Activated CD8-positive, alpha-beta memory T cell treated with anti-CD3 and anti-CD28 coated beads, Interleukin-2, amount 10 ng/mL, durations not matched to agents 7 days and 5 days (primary cell): ENCODE measurements at regions of chr6 and their contacts with region 1.

Region 1: GRCh38 chr6:43506667-43507471 is 3.3 kb downstream of the LRRC73 start:
- DNase-seq: peak; percentile 86
- ATAC-seq: peak; percentile 68
- H3K4me3 Mint-ChIP-seq: no peak overlapping the region
- H3K27ac Mint-ChIP-seq: peak overlapping the region; percentile 20
- H3K4me1 Mint-ChIP-seq: peaks cover 17% of the 10 kb centered on the region
- H3K27me3 Mint-ChIP-seq: peaks cover 18% of the 10 kb centered on the region

Region 2: GRCh38 chr6:43263314-43264178 is 243.3 kb before region 1 on chr6:
- CTCF ChIA-PET with region 1: interaction called, 45 read pairs
- DNase-seq: peak; percentile 85
- ATAC-seq: peak; percentile 96
- H3K4me3 Mint-ChIP-seq: no peak overlapping the region
- H3K27ac Mint-ChIP-seq: no peak overlapping the region
- H3K4me1 Mint-ChIP-seq: no peaks in the 10 kb centered on the region
- H3K27me3 Mint-ChIP-seq: peaks cover 10% of the 10 kb centered on the region

Region 3: DNA sequence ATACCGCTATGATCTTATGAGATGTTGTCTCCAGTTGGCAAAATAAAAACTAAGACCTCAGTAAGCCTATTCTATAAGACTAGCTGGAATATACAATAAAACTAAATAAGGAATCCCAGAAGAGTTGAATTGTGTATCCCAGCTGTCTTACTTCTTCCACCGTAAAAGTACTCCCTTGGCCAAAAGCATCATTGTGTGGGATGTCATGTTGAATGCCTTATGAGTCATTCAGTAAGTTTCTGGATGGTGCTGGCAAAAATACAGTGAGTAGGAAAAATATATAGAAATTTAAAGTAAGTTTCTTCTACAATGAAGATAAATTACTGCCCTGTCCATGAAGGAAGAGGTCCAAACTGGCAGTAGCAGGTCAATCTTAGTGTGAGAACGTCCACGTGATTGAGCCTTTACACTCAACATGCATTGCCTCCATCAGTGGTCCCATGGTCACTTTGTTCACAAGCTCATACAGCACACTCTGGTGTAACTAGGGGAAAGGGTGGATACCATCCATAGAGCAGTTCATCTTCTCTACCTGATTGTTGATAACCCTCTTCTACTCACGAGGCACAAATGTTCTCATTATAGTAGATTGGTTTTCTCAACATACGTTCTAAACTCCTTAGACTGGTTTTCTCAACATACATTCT is 123.7 kb before region 1 on chr6:
- CTCF ChIA-PET with region 1: interaction called, 10 read pairs
- DNase-seq: no peak
- ATAC-seq: no peak
- H3K4me3 Mint-ChIP-seq: peak overlapping the region; percentile 40
- H3K27ac Mint-ChIP-seq: peak overlapping the region; percentile 90
- H3K4me1 Mint-ChIP-seq: peaks cover 40% of the 10 kb centered on the region
- H3K27me3 Mint-ChIP-seq: peaks cover 27% of the 10 kb centered on the region

Region 4: DNA sequence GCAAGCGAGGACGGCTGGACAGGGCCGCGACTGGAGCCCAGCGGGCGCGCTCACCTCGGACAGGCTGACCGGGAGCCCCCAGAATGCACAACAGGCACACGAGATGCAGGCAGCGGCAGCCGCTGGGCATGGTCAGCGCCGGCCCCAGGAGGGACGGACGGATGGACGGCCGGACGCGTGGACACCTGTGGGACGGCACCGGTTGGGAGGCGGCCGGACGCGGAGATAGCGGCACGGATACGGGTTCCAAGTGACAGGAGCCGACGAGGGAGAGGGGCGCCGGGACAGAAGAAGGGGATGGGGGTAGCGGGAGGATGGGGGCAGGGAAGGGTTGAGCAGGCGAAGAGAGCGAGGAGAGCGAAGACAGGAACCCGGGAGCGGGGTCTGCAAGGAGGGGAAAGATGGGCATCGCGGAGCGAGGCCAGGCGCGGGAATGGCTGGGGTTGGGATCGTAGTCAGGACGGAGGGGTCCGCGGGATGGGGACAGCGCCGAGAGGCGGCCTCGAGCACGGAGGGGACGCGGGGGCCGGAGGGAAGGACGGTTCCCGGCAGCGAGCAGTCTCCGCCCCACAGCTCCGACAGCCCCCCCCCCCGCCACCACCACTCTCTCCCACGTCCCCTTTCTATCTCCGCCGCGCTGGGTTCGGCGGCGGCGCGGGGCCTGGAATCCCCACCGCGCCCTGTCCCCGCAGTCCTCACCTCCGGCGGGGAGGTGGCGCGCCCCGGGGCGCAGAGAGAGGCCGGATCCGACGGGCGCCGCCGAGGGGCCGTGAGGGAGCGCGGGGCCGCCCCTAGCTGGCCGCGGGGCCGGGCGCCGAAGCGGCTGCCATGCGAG is 52.0 kb before region 1 on chr6:
- CTCF ChIA-PET with region 1: interaction called, 48 read pairs
- DNase-seq: no peak
- ATAC-seq: peak; percentile 72
- H3K4me3 Mint-ChIP-seq: peak overlapping the region; percentile 64
- H3K27ac Mint-ChIP-seq: no peak overlapping the region
- H3K4me1 Mint-ChIP-seq: peaks cover 8% of the 10 kb centered on the region
- H3K27me3 Mint-ChIP-seq: peaks cover 25% of the 10 kb centered on the region

Region 5: DNA sequence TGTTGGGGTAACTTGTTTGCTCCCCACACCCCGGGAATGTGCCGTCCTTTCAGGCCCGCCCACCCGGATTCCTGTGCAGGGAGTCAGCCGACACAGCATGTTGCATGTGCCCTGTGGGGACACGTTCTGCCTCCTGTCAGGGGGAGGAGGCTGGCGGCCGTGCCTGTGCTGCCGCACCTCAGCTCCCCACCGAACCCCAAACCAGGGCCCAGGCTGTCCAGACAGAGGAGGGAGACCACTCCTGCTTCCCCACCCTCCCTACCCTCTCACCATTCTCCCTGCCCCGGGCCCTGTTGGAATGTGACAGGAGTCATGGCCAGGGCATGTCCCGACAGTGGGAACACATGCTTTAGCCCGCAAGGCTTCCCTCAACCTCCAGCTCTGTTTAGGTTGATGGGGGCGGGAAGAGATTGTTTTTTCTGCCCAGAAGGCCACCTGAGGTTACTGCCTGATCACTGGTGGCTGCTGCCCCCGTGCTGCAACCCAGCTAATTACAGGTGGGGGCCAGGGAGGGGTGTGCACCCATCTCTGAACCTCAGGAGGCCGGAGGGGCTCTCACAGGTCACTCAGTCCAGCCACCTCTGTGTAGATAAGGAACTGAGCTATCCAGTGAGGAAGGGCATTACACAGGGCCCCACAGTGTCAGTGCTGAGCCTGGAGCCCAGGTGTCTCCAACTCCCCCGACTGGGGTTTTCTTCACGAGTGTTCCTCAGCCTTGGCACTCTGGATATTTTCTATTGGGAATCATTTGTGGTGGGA is 10.3 kb before region 1 on chr6:
- CTCF ChIA-PET with region 1: interaction called, 37 read pairs
- DNase-seq: no peak
- ATAC-seq: no peak
- H3K4me3 Mint-ChIP-seq: no peak overlapping the region
- H3K27ac Mint-ChIP-seq: no peak overlapping the region
- H3K4me1 Mint-ChIP-seq: peaks cover 15% of the 10 kb centered on the region
- H3K27me3 Mint-ChIP-seq: no peaks in the 10 kb centered on the region

Region 6: DNA sequence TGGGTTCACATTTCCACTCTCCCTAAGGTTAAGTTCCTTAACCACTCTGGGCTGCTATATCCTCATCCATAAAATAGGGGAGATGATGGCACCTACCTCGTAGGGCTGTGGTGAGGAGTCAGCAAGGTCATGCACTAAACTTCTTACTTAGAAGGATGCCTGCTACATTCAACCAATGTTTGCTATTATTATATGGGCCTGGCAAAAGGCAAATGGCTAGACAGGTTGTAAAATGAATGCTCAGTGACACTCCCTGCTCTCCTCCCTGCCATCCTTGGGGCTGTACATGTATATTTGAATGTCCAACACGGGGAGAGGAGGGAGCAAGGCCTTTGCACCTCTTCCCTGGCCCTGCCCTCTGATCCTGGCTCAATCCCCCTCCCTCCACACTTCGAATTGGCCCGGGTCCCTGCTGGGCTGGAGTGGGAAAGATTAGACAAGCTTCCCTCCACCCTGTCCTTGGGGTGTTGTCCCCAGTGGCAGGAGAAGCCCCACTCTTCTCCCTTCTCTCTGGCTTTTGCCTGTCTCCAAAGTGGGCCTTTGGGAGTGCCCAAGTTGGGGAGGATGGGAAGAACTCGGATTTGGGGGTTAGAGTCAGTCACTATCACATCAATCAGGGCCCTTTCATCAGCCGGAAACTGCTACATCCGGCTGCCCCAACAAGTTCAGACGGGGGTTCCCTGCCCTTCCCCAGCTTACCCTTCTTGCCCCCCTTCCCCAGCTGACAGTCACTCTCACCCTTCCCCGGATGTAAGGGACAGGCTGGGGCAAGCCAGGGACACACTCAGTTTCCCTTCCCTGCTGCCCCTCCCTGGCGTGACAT is 226.8 kb after region 1 on chr6:
- CTCF ChIA-PET with region 1: no interaction called
- DNase-seq: peak; percentile 58
- ATAC-seq: peak; percentile 39
- H3K4me3 Mint-ChIP-seq: no peak overlapping the region
- H3K27ac Mint-ChIP-seq: peak overlapping the region; percentile 46
- H3K4me1 Mint-ChIP-seq: peaks cover 10% of the 10 kb centered on the region
- H3K27me3 Mint-ChIP-seq: peaks cover 4% of the 10 kb centered on the region